Tibial artery (tissue), 4 donors: ENCODE measurements at regions of chr11 and their contacts with region 1.

Region 1: DNA sequence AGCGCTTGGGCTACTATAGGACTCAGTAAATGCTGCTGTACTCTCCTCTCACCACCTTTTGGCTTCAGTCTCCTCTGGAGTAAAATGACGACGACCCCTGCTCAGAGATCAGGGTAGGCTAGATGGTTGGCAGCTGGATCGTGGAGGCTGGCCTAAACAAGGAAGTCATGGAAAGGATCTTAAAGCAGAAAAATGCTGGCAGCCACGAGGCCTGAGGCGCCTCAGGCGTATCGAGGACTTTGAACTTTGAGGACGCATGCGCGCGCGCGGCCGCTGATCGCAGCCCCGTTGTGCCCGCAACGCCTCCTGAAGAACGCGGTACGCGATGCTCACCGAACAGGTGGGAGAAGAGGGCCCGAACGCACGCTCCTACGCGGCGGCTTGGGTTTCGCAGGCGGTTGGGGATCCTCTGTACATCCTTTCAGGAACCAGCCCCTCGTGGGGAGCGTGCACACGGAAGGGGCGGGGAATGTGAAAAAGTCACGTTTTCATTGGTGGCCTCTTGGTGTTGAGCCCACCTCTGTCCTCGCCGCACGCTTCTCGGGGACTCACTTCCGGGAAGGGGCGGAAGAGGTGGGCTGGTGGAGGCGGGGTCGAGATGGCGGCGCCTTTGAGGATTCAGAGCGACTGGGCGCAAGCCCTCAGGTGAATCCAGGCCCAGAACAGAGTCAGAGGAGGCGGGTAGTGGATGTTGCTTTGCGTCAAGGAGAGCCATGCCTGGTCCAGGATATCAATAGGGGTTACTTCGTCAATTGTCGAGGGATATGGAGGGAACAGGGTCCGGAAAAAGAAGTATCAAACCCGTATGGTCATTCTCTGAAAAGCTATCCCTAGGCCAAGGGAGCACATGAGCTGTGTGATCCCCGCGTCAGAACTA is at the starts of genes COA4 and PAAF1:
- DNase-seq: peak; percentile 94 to 96
- H3K4me3 ChIP-seq: peak within 1 kb of the TSS; percentile 83
- H3K27ac ChIP-seq: peak within 1 kb of the TSS; percentile 80 to 86
- H3K4me1 ChIP-seq: peaks cover 0 to 22% (median 18%) of the 10 kb centered on the region in 4 donors
- H3K27me3 ChIP-seq: no peaks in the 10 kb centered on the region
- CTCF ChIP-seq: no peak

Region 2: DNA sequence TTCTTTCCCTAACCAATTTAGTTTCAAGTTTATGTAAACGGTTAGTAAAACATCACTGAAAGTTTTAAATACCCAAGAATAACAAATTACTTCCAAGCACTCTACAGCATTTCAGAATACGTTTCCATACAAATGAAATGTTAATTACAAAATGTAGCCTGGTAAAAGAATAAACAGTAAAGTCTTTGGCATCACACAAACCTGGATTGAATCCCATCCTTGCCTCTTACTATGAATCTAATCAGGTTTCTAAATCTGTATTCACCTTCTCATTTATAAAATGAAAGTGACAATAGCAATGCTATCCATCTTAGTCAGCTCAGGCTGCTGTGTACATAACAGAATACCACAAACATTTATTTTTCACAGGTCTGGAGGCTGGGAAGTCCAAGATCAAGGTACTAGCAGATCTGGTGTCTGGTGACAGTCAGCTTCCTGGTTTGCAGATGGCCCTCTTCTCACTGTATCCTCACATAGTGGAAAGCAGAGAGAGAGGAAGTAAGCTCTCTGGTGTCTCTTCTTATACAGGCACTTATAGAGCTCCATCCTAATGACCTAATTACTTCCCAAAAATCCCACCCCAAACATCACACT is 298.0 kb before region 1 on chr11:
- intact Hi-C with region 1: no loop called
- DNase-seq: no peak
- H3K4me3 ChIP-seq: no peak overlapping the region
- H3K27ac ChIP-seq: no peak overlapping the region
- H3K4me1 ChIP-seq: no peaks in the 10 kb centered on the region
- H3K27me3 ChIP-seq: no peaks in the 10 kb centered on the region
- CTCF ChIP-seq: no peak

Region 3: DNA sequence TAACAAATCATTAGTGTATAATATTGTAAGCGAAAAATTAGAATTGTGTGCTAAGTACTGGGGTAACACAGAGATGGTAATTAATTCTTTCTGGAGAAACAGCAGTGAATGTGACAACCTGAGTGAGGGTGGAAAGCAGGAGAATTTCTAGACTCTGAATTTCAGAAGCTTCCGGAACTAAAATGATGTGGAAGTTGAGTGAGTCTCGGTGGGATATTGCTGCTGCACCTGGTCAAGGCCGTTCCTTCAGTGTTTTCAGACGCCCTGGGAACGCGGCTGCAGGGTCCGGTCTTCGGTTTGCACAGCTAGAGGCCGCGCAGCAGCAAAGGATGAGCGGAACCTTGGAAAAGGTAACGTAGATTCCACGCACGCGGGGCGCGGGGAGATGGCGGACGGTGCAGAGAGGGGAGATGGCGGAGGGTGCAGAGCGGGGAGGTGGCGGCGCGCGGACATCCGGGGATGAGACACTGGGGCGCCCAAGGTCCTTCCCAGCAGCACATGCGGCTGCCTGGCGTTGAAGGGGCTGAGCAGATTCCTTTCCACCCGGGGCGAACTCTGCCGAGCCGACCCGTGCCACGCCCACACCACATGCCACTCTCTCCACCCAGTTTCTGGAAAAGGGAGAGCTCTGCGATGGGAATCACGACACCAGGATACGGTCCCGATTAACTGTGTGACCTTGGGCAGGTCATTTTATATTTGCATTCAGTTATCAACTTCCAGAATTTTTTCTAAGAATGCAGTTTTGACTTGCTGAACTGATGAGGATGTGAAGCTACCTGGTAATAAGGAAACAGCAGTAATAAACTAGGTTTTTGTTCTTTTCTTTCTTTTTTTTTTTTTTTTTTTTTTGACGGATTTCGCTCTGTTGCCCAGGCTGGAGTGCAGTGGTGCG is 88.8 kb before region 1 on chr11 and contains the start of gene MRPL48:
- intact Hi-C with region 1: loop called (anchors 5 kb)
- DNase-seq: peak; percentile 86 to 93
- H3K4me3 ChIP-seq: peak within 1 kb of the TSS; percentile 67
- H3K27ac ChIP-seq: peak within 1 kb of the TSS; percentile 76 to 80
- H3K4me1 ChIP-seq: peaks cover 0 to 16% (median 7%) of the 10 kb centered on the region in 4 donors
- H3K27me3 ChIP-seq: no peaks in the 10 kb centered on the region
- CTCF ChIP-seq: no peak

Region 4: GRCh38 chr11:73969991-73970800 is 93.5 kb after region 1 on chr11:
- intact Hi-C with region 1: no loop called
- DNase-seq: no peak
- H3K4me3 ChIP-seq: no peak overlapping the region
- H3K27ac ChIP-seq: no peak overlapping the region
- H3K4me1 ChIP-seq: no peaks in the 10 kb centered on the region
- H3K27me3 ChIP-seq: no peaks in the 10 kb centered on the region
- CTCF ChIP-seq: no peak